ENCODE measurements at regions of chr12 and their contacts with region 1.

Region 1: DNA sequence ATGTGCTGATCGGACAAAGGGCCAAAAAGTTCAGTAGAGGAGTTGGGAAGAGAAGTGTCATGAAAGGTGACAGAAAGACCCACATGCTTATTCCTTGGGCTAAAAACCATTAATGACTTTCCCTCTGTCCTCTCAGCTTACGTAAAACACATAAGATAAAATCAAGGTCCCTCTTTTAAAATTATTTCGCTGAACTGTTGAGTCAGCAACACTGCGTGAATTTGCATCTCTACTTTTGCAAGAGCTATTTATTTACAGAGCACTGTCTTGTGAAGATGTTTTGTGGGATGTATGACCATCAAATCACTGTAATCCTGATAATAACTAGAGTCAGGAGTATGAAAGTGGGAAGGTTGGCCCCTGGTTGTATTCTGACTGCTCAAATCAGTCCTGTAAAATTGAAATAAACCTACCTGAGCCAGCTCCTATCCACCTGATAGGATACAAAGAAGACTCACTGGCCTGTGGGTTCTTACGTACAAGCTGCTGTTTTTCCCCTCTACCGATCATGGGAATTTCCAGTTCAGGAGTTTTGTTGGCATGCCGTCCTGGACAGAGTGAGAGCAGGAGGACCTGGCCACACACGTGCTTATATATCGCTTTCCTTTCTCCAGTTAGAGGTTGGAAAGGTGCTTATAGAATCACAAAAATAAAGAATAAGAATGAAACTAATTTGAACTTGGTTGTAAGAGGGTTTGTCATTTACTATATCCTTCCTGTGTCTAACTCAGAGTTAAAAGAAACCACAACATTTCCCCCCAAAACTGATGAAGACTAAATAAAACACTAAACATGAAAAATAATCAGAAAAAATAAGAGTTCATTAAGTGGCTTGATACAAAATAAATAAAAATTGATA is 42.9 kb downstream of the IFNG-AS1 start:
- DNase-seq: no peak
- H3K4me3 Mint-ChIP-seq: peak overlapping the region; percentile 55
- H3K27ac Mint-ChIP-seq: peak overlapping the region; percentile 74
- H3K4me1 Mint-ChIP-seq: peaks cover 56% of the 10 kb centered on the region
- H3K27me3 Mint-ChIP-seq: no peaks in the 10 kb centered on the region

Region 2: DNA sequence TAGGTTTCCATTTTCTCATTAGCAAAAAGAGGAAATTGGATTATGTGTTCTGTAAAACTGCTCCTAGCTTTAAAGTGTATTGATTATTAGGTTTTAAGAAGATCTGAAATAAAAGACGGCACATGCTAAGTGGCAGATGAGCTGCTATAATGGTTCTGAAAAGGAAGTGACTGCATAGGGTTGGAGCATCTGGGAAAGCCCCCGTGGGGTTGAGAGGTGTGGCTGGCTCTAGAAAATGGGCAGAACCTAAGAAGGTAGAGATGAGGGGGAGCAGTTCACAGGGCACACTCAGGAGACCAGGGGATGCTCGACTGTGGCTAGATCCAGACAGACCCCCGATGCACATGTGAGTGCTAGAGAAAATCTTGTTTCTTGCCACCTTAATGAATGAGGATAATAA is 41.0 kb before region 1 on chr12:
- CTCF ChIA-PET with region 1: interaction called, 3 read pairs
- POLR2A ChIA-PET with region 1: interaction called, 6 read pairs
- intact Hi-C with region 1: loop called (anchors 5 kb)
- DNase-seq: peak; percentile 71
- H3K4me3 Mint-ChIP-seq: peak overlapping the region; percentile 65
- H3K27ac Mint-ChIP-seq: peak overlapping the region; percentile 55
- H3K4me1 Mint-ChIP-seq: peaks cover 40% of the 10 kb centered on the region
- H3K27me3 Mint-ChIP-seq: no peaks in the 10 kb centered on the region

Region 3: DNA sequence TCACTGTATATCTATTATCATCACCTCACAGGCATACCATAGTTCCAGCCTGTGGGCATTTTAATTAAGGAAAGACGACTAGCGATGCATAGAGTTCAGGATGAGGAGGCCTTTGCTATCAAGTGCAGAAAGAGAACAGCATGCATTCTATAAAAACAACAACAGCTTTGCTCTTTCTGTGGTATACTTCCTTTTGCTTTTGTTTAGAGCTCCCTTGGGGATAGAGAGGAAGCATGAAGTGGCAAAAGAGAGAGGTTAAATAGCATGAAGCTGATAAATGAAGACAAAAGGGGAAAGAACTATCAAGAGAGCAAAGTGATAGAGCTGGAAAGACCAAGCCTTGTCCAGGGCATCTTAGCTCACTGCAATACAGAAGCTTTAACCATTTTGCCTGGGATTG is 19.4 kb before region 1 on chr12:
- CTCF ChIA-PET with region 1: interaction called, 3 read pairs
- POLR2A ChIA-PET with region 1: interaction called, 13 read pairs
- intact Hi-C with region 1: loop called (anchors 2 kb)
- DNase-seq: no peak
- H3K4me3 Mint-ChIP-seq: no peak overlapping the region
- H3K27ac Mint-ChIP-seq: peak overlapping the region; percentile 81
- H3K4me1 Mint-ChIP-seq: peaks cover 34% of the 10 kb centered on the region
- H3K27me3 Mint-ChIP-seq: no peaks in the 10 kb centered on the region